Heart right ventricle (tissue), 16 donors: ENCODE measurements at regions of chr11 and their contacts with region 1.

Region 1: DNA sequence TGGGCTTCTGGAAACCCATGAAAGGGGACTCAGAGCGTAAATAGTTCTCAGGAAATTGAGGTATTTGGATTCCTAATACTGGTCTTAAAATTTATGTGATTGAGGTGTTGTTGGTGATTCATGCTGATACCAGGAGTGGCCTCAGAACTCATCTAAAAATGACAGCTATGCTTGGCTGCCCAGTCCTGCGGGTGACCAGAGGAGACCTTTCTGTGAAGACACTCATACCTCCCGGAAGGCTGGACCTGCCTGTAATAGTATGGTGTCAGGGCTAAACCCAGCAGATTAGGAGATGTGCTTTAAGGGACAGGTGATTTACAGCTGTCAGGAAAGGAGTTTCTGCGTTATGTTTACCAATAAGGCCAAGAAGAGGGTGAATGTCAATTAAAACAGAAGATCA is 29.9 kb downstream of the C11orf96 start:
- DNase-seq: no peak
- ATAC-seq: no peak
- H3K4me3 ChIP-seq: no peak overlapping the region
- H3K27ac ChIP-seq: no peak overlapping the region
- H3K4me1 ChIP-seq: peaks cover 0 to 20% (median 12%) of the 10 kb centered on the region in 9 donors
- H3K27me3 ChIP-seq: no peaks in the 10 kb centered on the region
- CTCF ChIP-seq: no peak

Region 2: DNA sequence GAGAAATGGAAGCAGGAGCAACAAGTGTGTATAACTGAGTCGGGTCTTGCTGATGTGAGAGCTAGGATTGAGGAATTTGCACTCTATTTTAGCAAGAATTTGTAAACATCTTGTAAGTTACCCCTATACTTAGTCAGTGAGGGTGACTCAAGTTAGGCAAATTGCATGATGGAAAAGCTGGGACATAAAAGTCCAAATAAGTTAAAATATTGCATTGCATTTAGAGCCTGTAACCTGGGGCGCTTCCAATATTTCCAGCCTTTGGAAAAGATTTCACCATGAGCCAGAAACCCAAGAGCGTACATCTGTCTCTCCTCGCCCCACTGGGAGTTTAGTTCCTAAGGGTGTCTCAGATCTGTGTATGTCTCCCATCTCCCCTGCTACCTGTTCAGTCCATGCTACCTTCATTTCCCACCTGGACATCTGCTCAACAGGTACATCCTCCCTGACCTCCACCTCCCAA is 38.5 kb after region 1 on chr11:
- intact Hi-C with region 1: loop called in 1 of 10 experiments (anchors 1 kb)
- DNase-seq: no peak
- ATAC-seq: no peak
- H3K4me3 ChIP-seq: no peak overlapping the region
- H3K27ac ChIP-seq: no peak overlapping the region
- H3K4me1 ChIP-seq: peaks cover 0 to 13% (median 7%) of the 10 kb centered on the region in 9 donors
- H3K27me3 ChIP-seq: no peaks in the 10 kb centered on the region
- CTCF ChIP-seq: no peak